ENCODE measurements at regions of chr3 and their contacts with region 1.

Region 1: GRCh38 chr3:100463002-100463401 is 29.4 kb upstream of the TMEM45A start:
- DNase-seq: peak; percentile 69
- H3K4me3 ChIP-seq: peak overlapping the region in 1 of 2 experiments; percentile 21; a peak in 1 of 4 replicates
- H3K27ac ChIP-seq: no peak overlapping the region
- H3K4me1 ChIP-seq: 0 out of 4 replicates have a peak, but pooled peaks cover 0 to 2% of the 10 kb centered on the region in 2 experiments
- H3K27me3 ChIP-seq: no peaks in the 10 kb centered on the region
- CTCF ChIP-seq: peak; percentile 86
- EP300 ChIP-seq: no peak
- RAD21 ChIP-seq: peak; percentile 97

Region 2: DNA sequence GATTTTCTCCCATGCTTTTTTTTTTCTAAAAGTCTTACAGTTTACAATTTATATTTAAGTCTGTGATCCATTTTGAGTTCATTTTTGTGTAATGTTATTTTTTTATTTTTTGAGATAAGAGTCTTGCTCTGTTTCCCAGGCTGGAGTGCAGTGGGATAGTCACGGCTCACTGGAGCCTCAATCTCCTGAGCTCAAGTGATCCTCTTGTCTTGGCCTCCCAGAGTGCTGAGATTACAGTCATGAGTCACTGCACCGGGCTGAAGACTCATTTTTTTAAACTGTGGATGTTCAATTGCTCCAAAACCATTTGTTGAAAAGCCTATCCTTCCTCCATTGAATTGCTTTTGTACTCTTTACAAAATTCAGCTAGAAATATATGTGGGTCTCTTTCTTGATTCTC is 42.1 kb before region 1 on chr3:
- CTCF ChIA-PET with region 1: no interaction called
- POLR2A ChIA-PET with region 1: no interaction called
- DNase-seq: no peak
- H3K4me3 ChIP-seq: no peak overlapping the region
- H3K27ac ChIP-seq: no peak overlapping the region
- H3K4me1 ChIP-seq: no peaks in the 10 kb centered on the region
- H3K27me3 ChIP-seq: no peaks in the 10 kb centered on the region
- CTCF ChIP-seq: no peak
- EP300 ChIP-seq: no peak
- RAD21 ChIP-seq: no peak

Region 3: GRCh38 chr3:100449214-100449613 is 13.8 kb before region 1 on chr3:
- CTCF ChIA-PET with region 1: interaction called, 14 read pairs
- POLR2A ChIA-PET with region 1: no interaction called
- DNase-seq: no peak
- H3K4me3 ChIP-seq: no peak overlapping the region
- H3K27ac ChIP-seq: no peak overlapping the region
- H3K4me1 ChIP-seq: no peaks in the 10 kb centered on the region
- H3K27me3 ChIP-seq: no peaks in the 10 kb centered on the region
- CTCF ChIP-seq: no peak
- EP300 ChIP-seq: no peak
- RAD21 ChIP-seq: no peak

Region 4: GRCh38 chr3:100570811-100571210 is 107.8 kb after region 1 on chr3:
- CTCF ChIA-PET with region 1: interaction called, 15 read pairs
- POLR2A ChIA-PET with region 1: no interaction called
- DNase-seq: no peak
- H3K4me3 ChIP-seq: no peak overlapping the region
- H3K27ac ChIP-seq: no peak overlapping the region
- H3K4me1 ChIP-seq: no peaks in the 10 kb centered on the region
- H3K27me3 ChIP-seq: no peaks in the 10 kb centered on the region
- CTCF ChIP-seq: no peak
- EP300 ChIP-seq: no peak
- RAD21 ChIP-seq: no peak

Region 5: DNA sequence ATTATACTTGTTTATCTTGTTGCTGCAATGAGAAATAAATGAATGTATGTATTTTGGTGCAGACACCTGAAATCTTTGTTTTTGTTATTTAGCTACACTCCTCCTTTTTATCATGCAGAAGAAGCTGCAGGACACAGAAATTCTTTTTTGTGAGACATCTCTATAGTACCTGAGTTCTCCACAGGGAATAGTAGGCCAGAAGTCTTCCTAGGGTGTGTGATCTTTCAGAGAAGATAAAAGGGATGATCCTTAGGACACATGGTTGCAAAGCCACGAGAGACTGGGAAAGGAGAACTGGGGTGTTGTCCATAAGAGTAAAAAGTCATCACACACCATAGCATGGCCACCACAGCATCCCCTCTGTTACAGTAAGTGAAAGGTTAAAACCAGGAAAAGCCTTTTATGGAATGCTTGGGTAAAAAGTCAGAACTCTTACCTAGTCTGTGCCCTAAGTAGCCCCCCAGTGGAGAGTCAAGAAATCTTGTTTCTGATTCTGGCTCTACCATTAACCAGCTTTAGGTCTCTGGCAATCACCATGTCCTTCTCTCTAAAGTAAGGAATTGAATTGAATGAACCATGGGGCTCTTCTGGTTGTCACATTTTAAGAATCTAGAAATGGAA is 114.5 kb after region 1 on chr3:
- CTCF ChIA-PET with region 1: interaction called, 27 read pairs
- POLR2A ChIA-PET with region 1: no interaction called
- DNase-seq: no peak
- H3K4me3 ChIP-seq: no peak overlapping the region
- H3K27ac ChIP-seq: no peak overlapping the region
- H3K4me1 ChIP-seq: no peaks in the 10 kb centered on the region
- H3K27me3 ChIP-seq: no peaks in the 10 kb centered on the region
- CTCF ChIP-seq: no peak
- EP300 ChIP-seq: no peak
- RAD21 ChIP-seq: no peak

Region 6: GRCh38 chr3:100603469-100603868 is 140.5 kb after region 1 on chr3:
- CTCF ChIA-PET with region 1: interaction called, 26 read pairs
- POLR2A ChIA-PET with region 1: no interaction called
- DNase-seq: peak; percentile 40
- H3K4me3 ChIP-seq: no peak overlapping the region
- H3K27ac ChIP-seq: peak overlapping the region in 1 of 2 experiments; percentile 25; a peak in 1 of 4 replicates
- H3K4me1 ChIP-seq: no peaks in the 10 kb centered on the region; a peak in 3 of 4 replicates
- H3K27me3 ChIP-seq: no peaks in the 10 kb centered on the region
- CTCF ChIP-seq: peak; percentile 62
- EP300 ChIP-seq: no peak
- RAD21 ChIP-seq: peak; percentile 68

Region 7: GRCh38 chr3:100693225-100693624 is 230.2 kb after region 1 on chr3:
- CTCF ChIA-PET with region 1: no interaction called
- POLR2A ChIA-PET with region 1: no interaction called
- DNase-seq: no peak
- H3K4me3 ChIP-seq: no peak overlapping the region
- H3K27ac ChIP-seq: no peak overlapping the region
- H3K4me1 ChIP-seq: no peaks in the 10 kb centered on the region; a peak in 1 of 4 replicates
- H3K27me3 ChIP-seq: no peaks in the 10 kb centered on the region
- CTCF ChIP-seq: no peak
- EP300 ChIP-seq: no peak
- RAD21 ChIP-seq: no peak